Activated CD4-positive, alpha-beta memory T cell treated with anti-CD3 and anti-CD28 coated beads for 36 hours (primary cell): ENCODE measurements at regions of chr1 and their contacts with region 1.

Region 1: GRCh38 chr1:159854693-159855192 is 7.7 kb downstream of the VSIG8 start:
- DNase-seq: peak; percentile 86
- H3K4me3 Mint-ChIP-seq: peak overlapping the region; percentile 79
- H3K27ac Mint-ChIP-seq: peak overlapping the region; percentile 3
- H3K4me1 Mint-ChIP-seq: peaks cover 10% of the 10 kb centered on the region
- H3K27me3 Mint-ChIP-seq: no peaks in the 10 kb centered on the region

Region 2: GRCh38 chr1:159780583-159781582 is 73.9 kb before region 1 on chr1 and contains the start of gene DUSP23:
- CTCF ChIA-PET with region 1: no interaction called
- POLR2A ChIA-PET with region 1: interaction called, 4 read pairs
- intact Hi-C with region 1: loop called (anchors 2 kb)
- DNase-seq: peak; percentile 98
- H3K4me3 Mint-ChIP-seq: peak within 1 kb of the TSS; percentile 78
- H3K27ac Mint-ChIP-seq: peak within 1 kb of the TSS; percentile 25
- H3K4me1 Mint-ChIP-seq: peaks cover 5% of the 10 kb centered on the region
- H3K27me3 Mint-ChIP-seq: no peaks in the 10 kb centered on the region
- total RNA-seq, gene DUSP23: 26.9 to 28.3 TPM

Region 3: DNA sequence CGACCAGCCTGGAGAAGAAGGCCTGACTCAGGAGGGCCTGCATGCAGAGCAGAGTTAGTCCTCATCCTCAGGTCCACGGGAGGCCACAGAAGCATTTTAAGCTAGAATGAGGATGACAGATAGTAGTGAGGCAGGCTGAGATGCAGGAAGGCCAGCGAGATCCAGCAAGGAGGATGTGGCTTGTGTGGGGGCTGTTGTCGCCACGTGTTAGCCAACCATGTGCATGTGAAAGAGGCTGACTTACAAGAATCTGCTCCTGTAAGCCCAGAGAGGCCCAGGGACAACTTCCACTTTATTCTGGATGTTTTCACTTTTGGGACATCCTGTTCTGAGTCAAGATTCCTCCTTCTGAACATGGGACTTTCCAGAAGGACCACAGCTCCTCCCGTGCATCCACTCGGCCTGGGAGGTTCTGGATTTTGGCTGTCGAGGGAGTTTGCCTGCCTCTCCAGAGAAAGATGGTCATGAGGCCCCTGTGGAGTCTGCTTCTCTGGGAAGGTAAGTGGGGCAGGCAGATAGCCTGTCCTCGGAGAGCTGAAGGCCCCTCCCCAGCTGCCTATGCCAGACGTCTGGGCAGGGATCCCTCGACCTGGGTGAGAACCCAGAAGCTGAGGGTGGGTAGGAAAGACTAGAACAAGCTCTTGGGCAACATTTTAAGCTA is 28.2 kb before region 1 on chr1 and contains the start of gene SLAMF8:
- CTCF ChIA-PET with region 1: no interaction called
- POLR2A ChIA-PET with region 1: no interaction called
- intact Hi-C with region 1: loop called (anchors 2 kb)
- DNase-seq: peak; percentile 83
- H3K4me3 Mint-ChIP-seq: no peak within 1 kb of the TSS
- H3K27ac Mint-ChIP-seq: peak within 1 kb of the TSS; percentile 13
- H3K4me1 Mint-ChIP-seq: peaks cover 42% of the 10 kb centered on the region
- H3K27me3 Mint-ChIP-seq: no peaks in the 10 kb centered on the region
- total RNA-seq, gene SLAMF8: 0.53 to 0.55 TPM